A549 (cell line): ENCODE measurements at regions of chr3 and their contacts with region 1.

Region 1: GRCh38 chr3:183252973-183253901 is at the start of gene B3GNT5:
- DNase-seq: peak in 1 of 2 experiments; percentile 46
- ATAC-seq: peak; percentile 64 to 69
- H3K4me3 ChIP-seq: peak within 1 kb of the TSS; percentile 70
- H3K27ac ChIP-seq: peak within 1 kb of the TSS; percentile 79 to 90
- H3K4me1 ChIP-seq: peaks cover 6% of the 10 kb centered on the region; the same call in 1 of the 3 replicates
- CTCF ChIP-seq: no peak
- EP300 ChIP-seq: no peak
- POLR2A ChIP-seq: no peak
- RAD21 ChIP-seq: no peak
- polyA plus RNA-seq, gene B3GNT5: 10.9 and 11.7 TPM in 2 replicates

Region 2: GRCh38 chr3:183265834-183266417 is 12.7 kb after region 1 on chr3:
- CTCF ChIA-PET with region 1: interaction called, 4 read pairs
- POLR2A ChIA-PET with region 1: interaction called, 12 read pairs
- DNase-seq: peak; percentile 70 to 81
- ATAC-seq: peak; percentile 98
- H3K4me3 ChIP-seq: no peak overlapping the region
- H3K27ac ChIP-seq: peak overlapping the region; percentile 48 to 79
- H3K4me1 ChIP-seq: peaks cover 26% of the 10 kb centered on the region; the same call in 2 of the 3 replicates
- CTCF ChIP-seq: no peak
- EP300 ChIP-seq: no peak
- POLR2A ChIP-seq: no peak
- RAD21 ChIP-seq: no peak

Region 3: GRCh38 chr3:184298759-184299496 is 1045.7 kb after region 1 on chr3 and contains the start of gene PSMD2:
- CTCF ChIA-PET with region 1: no interaction called
- POLR2A ChIA-PET with region 1: no interaction called
- DNase-seq: peak; percentile 82 to 92
- ATAC-seq: peak; percentile 95 to 99
- H3K4me3 ChIP-seq: peak within 1 kb of the TSS; percentile 83
- H3K27ac ChIP-seq: peak within 1 kb of the TSS; percentile 89 to 94
- H3K4me1 ChIP-seq: peaks cover 9% of the 10 kb centered on the region; the same call in 2 of the 3 replicates
- CTCF ChIP-seq: no peak
- EP300 ChIP-seq: no peak
- POLR2A ChIP-seq: peak; percentile 71
- RAD21 ChIP-seq: no peak
- polyA plus RNA-seq, gene PSMD2: 267 and 304 TPM in 2 replicates